ENCODE measurements at regions of chr10 and their contacts with region 1.

Region 1: DNA sequence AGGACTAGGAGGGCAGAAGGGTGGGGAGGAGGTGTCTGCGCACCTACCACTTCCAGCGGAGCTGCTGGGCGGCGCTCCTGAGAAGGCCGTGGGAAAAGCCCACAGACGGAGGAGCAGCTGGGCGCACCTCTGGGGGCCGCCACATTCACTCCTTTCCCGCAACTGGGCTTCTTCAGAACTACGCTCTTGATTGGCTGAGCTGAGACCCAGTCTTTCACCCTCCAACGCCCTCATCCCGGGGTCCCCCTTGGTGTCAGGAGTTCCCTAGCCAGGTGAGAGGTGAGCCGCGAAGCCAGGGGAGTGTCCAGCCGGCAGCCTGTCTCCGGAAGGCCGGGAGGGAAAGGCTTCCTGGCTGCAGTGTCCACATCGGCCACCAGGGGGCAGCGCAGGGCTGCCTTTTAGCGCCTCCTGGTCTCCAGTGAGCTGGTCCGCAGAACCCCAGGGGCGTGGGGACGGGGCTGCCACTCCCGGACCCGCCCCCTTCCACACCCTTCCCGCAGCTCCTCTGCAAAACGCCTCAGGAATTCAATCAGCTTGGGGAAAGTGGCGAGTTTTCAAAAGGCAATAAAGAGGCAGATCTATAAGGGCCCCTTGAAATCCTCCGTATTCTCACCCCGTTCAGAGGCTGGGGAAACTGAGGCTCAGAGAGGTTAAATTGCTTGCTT is 98.8 kb downstream of the CHST15 start:
- DNase-seq: peak; percentile 70 to 90
- H3K4me3 ChIP-seq: peak overlapping the region; percentile 50; the same call in 1 of the 2 replicates
- H3K27ac ChIP-seq: peak overlapping the region; percentile 99
- H3K4me1 ChIP-seq: peaks cover 29% of the 10 kb centered on the region
- H3K27me3 ChIP-seq: no peaks in the 10 kb centered on the region
- CTCF ChIP-seq: peak; percentile 92

Region 2: GRCh38 chr10:124092860-124093773 is 98.6 kb after region 1 on chr10 and contains the start of gene CHST15:
- CTCF ChIA-PET with region 1: interaction called, 3 read pairs
- POLR2A ChIA-PET with region 1: interaction called, 3 read pairs
- intact Hi-C with region 1: loop called (anchors 2 kb)
- DNase-seq: peak; percentile 65 to 80
- H3K4me3 ChIP-seq: peak within 1 kb of the TSS; percentile 75
- H3K27ac ChIP-seq: peak within 1 kb of the TSS; percentile 83
- H3K4me1 ChIP-seq: peaks cover 11% of the 10 kb centered on the region
- H3K27me3 ChIP-seq: no peaks in the 10 kb centered on the region
- CTCF ChIP-seq: no peak
- total RNA-seq, gene CHST15: 23.8 and 24.6 TPM in 2 replicates

Region 3: GRCh38 chr10:124106241-124106879 is 111.8 kb after region 1 on chr10:
- CTCF ChIA-PET with region 1: interaction called, 6 read pairs
- POLR2A ChIA-PET with region 1: interaction called, 5 read pairs
- intact Hi-C with region 1: loop called (anchors 5 kb)
- DNase-seq: peak; percentile 66 to 90
- H3K4me3 ChIP-seq: peak overlapping the region; percentile 48; the same call in 1 of the 2 replicates
- H3K27ac ChIP-seq: peak overlapping the region; percentile 95
- H3K4me1 ChIP-seq: peaks cover 38% of the 10 kb centered on the region
- H3K27me3 ChIP-seq: no peaks in the 10 kb centered on the region
- CTCF ChIP-seq: no peak

Region 4: DNA sequence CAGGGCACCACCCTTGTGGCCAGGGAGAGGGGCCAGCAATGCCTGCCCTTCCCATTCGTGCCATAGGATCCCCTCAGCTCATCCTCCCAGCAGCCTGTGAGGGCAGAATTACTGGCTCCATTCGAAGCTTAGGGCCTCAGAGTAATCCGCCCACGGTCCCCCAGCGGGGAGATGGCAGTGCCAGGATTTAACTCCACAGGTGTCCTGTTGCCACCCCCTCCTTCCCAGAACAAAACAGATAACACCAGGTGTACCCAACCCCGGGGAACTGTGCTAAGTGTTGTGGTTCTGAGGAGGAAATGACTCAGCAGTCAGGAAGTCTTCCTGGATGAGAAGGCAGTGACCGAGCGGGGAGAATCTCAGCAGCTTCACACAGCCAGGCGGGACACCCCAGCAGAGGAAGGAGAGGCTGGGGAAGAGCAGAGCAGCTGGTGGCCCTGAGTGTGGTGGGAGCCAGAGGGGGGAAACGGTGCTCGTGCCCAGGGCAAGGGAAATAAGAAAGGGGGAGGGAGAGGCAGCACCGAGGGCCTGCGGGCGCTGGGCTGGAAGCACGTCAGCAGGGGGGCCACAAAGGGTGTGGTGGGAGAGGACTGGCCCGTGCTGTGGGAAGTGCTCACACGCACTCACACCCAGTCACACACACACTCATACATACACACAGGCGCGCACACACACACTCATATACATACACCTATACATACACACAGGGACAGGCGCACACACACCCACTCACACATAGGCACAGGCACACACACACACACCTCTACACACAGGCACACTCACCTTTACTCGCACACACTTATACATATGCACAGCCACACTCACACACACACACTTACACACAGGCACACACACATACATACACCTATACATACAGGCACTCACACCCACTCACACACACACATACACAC is 158.6 kb after region 1 on chr10:
- CTCF ChIA-PET with region 1: no interaction called
- POLR2A ChIA-PET with region 1: no interaction called
- intact Hi-C with region 1: loop called (anchors 1 kb)
- DNase-seq: peak; percentile 84 to 99
- H3K4me3 ChIP-seq: peak overlapping the region; percentile 41; the same call in 1 of the 2 replicates
- H3K27ac ChIP-seq: peak overlapping the region; percentile 94
- H3K4me1 ChIP-seq: peaks cover 47% of the 10 kb centered on the region
- H3K27me3 ChIP-seq: no peaks in the 10 kb centered on the region
- CTCF ChIP-seq: no peak

Region 5: DNA sequence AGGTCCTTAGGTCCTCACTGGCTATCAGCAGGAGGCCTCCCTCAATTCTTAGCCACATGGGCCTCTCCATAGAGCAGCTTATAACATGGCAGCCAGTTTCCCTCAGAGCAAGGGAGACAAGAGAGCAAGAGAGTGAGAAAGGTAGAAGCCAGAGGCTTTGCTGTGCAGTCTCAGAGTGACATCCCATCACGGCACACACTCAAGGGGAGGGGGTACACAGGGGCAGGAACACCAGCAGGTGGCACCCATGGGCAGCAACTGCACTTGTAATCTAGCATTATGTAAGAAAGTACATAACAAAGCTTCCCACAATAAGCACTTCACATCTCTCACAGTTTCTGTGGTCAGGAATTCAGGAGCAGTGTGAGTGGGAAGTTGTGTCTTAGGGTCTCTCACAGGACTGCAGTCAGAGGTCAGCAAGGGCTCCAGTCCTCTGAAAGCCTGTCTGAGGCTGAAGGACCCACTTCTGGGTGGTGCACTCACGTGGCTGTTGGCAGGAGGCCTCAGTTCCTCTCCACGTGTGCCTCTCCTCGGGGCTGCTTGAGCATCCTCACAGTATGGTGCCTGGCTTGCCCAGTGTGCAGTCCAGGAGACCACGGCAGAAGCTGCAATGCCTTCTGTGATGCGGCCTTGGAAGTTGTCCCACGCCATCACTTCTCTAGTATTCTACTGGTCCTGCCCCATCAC is 264.7 kb after region 1 on chr10:
- CTCF ChIA-PET with region 1: no interaction called
- POLR2A ChIA-PET with region 1: no interaction called
- intact Hi-C with region 1: loop called (anchors 10 kb)
- DNase-seq: peak in 1 of 2 experiments; percentile 12
- H3K4me3 ChIP-seq: no peak overlapping the region
- H3K27ac ChIP-seq: no peak overlapping the region
- H3K4me1 ChIP-seq: no peaks in the 10 kb centered on the region
- H3K27me3 ChIP-seq: no peaks in the 10 kb centered on the region
- CTCF ChIP-seq: peak; percentile 46; the same call in 1 of the 2 replicates

Region 6: GRCh38 chr10:124388823-124389612 is 394.5 kb after region 1 on chr10:
- CTCF ChIA-PET with region 1: interaction called, 24 read pairs
- POLR2A ChIA-PET with region 1: no interaction called
- intact Hi-C with region 1: loop called (anchors 1 kb)
- DNase-seq: peak; percentile 55 to 85
- H3K4me3 ChIP-seq: peak overlapping the region; percentile 46; the same call in 1 of the 2 replicates
- H3K27ac ChIP-seq: no peak overlapping the region
- H3K4me1 ChIP-seq: peaks cover 13% of the 10 kb centered on the region
- H3K27me3 ChIP-seq: no peaks in the 10 kb centered on the region
- CTCF ChIP-seq: peak; percentile 80

Region 7: DNA sequence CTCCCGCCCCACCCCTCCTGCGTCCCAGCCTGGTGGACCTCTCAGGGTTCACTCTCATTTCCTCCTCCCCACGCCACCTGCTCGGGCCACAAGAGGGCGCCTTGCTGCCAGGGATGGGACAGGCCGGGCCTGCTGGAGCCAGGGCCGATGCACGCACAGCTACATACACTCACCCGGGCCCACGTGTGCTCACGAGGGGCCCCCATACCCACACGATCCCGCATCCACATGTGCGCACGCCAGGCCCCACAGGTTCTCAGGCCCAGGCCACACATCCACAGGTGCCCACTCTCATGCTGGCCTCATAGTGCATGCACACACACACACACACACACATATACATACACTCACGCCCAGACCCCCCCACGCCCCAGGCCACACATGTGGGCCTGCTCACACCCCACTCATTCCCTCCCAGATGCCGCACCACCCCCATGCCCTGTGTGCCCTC is 535.7 kb after region 1 on chr10:
- CTCF ChIA-PET with region 1: no interaction called
- POLR2A ChIA-PET with region 1: no interaction called
- intact Hi-C with region 1: loop called (anchors 10 kb)
- DNase-seq: peak; percentile 45 to 79
- H3K4me3 ChIP-seq: no peak overlapping the region
- H3K27ac ChIP-seq: no peak overlapping the region
- H3K4me1 ChIP-seq: no peaks in the 10 kb centered on the region
- H3K27me3 ChIP-seq: no peaks in the 10 kb centered on the region
- CTCF ChIP-seq: peak; percentile 77